H1 (cell line): ENCODE measurements at regions of chr5 and their contacts with region 1.

Region 1: DNA sequence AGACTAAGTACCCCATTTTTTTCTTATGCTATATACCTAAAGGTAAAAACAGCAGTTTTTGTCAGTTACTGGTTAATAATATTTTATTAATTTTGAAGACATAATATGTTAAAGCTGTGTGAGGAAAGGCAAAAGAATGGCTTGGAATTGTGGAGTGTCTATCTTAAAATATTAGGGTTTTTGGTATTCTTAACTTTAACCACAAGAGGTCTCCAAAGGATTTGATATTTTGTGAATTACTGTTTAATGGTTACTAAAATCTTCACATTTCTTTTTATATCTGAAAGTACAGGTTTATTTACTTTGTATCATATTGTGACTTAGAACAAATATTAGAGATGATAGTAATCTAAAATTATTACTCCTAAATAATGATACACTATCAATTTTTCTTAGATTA is 32.0 kb upstream of the DHFR start:
- DNase-seq: no peak
- H3K4me3 ChIP-seq: no peak overlapping the region
- H3K27ac ChIP-seq: no peak overlapping the region
- H3K4me1 ChIP-seq: peaks cover 0 to 3% (median 2%) of the 10 kb centered on the region in 4 experiments; a peak in 2 of 7 replicates
- H3K27me3 ChIP-seq: peaks cover 0 to 1% (median 0%) of the 10 kb centered on the region in 4 experiments; a peak in 1 of 7 replicates
- CTCF ChIP-seq: peak in 1 of 3 experiments; percentile 6; a peak in 1 of 4 replicates
- EP300 ChIP-seq: no peak
- POLR2A ChIP-seq: no peak
- RAD21 ChIP-seq: peak in 1 of 2 experiments; percentile 41; a peak in 2 of 4 replicates

Region 2: GRCh38 chr5:80629281-80629680 is 57.5 kb before region 1 on chr5:
- CTCF ChIA-PET with region 1: no interaction called
- POLR2A ChIA-PET with region 1: no interaction called
- DNase-seq: no peak
- H3K4me3 ChIP-seq: no peak overlapping the region
- H3K27ac ChIP-seq: no peak overlapping the region
- H3K4me1 ChIP-seq: no peaks in the 10 kb centered on the region
- H3K27me3 ChIP-seq: no peaks in the 10 kb centered on the region
- CTCF ChIP-seq: no peak
- EP300 ChIP-seq: no peak
- POLR2A ChIP-seq: no peak
- RAD21 ChIP-seq: no peak

Region 3: DNA sequence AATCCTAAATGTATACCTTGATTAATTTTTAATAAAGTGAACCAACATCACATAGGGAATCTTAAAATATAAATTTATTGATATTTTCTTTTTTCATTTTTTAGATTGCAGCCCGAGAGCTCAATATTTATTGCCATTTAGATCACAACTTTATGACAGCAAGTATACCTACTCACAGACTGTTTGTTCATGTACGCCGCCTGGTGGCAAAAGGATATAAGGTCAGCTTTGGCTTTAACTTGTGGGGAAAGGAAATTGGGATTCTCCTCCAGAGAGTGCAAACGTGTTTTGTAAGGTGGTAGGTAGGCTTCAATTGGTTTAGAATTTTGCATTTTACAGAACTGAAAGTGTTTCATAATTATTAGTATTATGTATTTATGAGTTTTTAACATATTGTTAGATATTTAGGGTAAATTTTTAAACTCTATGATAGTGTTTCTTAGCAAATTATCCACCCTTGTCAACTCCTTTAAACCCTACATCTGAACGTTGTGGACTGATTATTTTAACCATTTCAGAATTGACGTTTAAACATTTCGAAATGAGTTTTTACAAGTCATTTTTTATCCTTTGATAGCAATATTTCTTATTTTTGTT is 14.5 kb before region 1 on chr5:
- CTCF ChIA-PET with region 1: interaction called, 15 read pairs
- POLR2A ChIA-PET with region 1: interaction called, 3 read pairs
- DNase-seq: peak in 1 of 2 experiments; percentile 77
- H3K4me3 ChIP-seq: no peak overlapping the region
- H3K27ac ChIP-seq: no peak overlapping the region
- H3K4me1 ChIP-seq: no peaks in the 10 kb centered on the region; a peak in 1 of 7 replicates
- H3K27me3 ChIP-seq: no peaks in the 10 kb centered on the region
- CTCF ChIP-seq: peak in 2 of 3 experiments; percentile 69 to 84; a peak in 3 of 4 replicates
- EP300 ChIP-seq: no peak
- POLR2A ChIP-seq: no peak
- RAD21 ChIP-seq: peak; percentile 69 to 81

Region 4: DNA sequence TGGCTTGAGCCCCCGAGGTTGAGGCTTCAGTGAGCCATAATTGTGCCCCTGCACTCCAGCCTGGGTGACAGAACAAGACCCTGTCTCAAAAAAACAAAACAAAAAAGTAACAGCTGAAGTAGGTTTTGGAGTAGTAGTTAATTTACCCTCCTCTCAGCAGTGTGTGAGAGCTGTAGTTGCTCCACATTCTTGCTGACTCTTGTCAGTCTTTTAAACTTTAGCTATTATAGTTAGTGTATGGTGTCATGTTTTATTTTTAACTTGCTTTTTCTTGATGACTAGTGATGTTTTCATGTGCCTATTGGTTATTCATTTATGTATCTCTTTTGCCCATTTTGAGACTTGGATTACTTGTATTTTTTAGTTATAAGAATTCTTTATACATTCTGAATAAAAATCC is 20.9 kb after region 1 on chr5:
- CTCF ChIA-PET with region 1: interaction called, 14 read pairs
- POLR2A ChIA-PET with region 1: no interaction called
- DNase-seq: no peak
- H3K4me3 ChIP-seq: no peak overlapping the region
- H3K27ac ChIP-seq: no peak overlapping the region
- H3K4me1 ChIP-seq: peaks cover 0 to 5% (median 1%) of the 10 kb centered on the region in 4 experiments; a peak in 2 of 7 replicates
- H3K27me3 ChIP-seq: no peaks in the 10 kb centered on the region
- CTCF ChIP-seq: no peak
- EP300 ChIP-seq: no peak
- POLR2A ChIP-seq: no peak
- RAD21 ChIP-seq: no peak

Region 5: DNA sequence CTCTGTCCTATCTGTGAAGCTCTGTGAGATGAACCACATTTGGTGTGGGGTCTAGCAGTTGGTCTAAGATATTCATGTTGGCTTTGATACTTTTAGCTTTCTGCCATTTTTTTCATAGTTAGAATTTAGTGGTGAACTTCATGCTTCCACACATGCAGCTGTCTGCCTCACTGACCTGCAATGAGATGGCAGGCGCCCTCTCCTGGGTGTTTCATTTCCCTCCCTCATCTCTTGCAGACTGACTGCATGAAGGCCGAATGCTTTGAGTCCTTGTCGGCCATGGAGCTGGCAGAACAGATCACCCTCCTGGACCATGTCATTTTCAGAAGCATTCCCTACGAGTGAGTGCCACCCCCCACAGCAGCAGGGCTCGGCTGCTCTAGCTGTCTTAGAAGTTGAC is 520.3 kb after region 1 on chr5:
- CTCF ChIA-PET with region 1: interaction called, 11 read pairs
- POLR2A ChIA-PET with region 1: no interaction called
- DNase-seq: no peak
- H3K4me3 ChIP-seq: no peak overlapping the region
- H3K27ac ChIP-seq: no peak overlapping the region
- H3K4me1 ChIP-seq: no peaks in the 10 kb centered on the region
- H3K27me3 ChIP-seq: no peaks in the 10 kb centered on the region
- CTCF ChIP-seq: peak; percentile 46 to 71 (median 66)
- EP300 ChIP-seq: no peak
- POLR2A ChIP-seq: no peak
- RAD21 ChIP-seq: peak; percentile 45 to 56